GM12878 (cell line): ENCODE measurements at regions of chr18 and their contacts with region 1.

Region 1: DNA sequence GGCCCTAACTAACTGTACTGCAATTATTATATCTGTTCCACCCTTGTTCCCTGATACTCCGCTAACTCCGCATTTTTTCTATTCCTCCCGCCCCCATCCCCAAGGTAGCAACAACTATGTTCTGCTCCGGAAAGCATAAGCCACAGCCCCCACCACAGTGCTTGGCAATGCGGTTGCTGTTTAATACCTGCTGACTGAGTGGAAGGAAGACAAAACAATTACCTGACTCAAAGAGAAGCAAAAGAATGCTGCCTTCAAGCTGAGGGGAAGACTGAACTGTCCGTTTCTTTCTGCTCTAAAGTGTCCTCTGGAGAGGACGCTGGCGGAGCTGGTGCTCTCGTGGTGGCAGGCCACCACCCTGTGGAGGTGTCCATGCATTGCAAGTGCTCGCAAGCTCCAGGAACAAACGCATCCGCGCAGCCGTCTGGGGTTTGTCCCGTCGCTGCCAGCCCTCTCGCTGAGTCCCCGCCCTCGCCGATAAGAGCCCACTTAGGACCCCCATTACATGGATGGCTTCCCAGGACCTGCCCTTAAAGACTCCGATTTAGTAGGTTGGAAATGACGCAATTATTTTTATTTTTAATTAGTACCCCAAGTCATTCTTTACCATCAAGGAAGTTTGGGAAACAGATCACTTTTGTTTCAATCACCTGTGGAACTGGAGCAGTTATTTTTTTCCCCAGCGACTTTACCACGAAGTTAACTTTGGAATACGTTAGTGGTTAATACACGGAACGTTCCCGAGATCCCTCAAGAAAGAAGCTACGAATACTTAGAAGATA is 1.6 kb upstream of the MYL12A start:
- DNase-seq: no peak
- ATAC-seq: peak; percentile 71
- H3K4me3 ChIP-seq: peak overlapping the region; percentile 91
- H3K27ac ChIP-seq: peak overlapping the region; percentile 95
- H3K4me1 ChIP-seq: no peaks in the 10 kb centered on the region
- H3K27me3 ChIP-seq: no peaks in the 10 kb centered on the region
- CTCF ChIP-seq: peak; percentile 98 to 99 (median 98)
- EP300 ChIP-seq: 0 out of 4 replicates have a peak, but pooled peaks of 1 of the 2 experiments have one; percentile 38
- POLR2A ChIP-seq: peak; percentile 60
- RAD21 ChIP-seq: peak; percentile 96

Region 2: GRCh38 chr18:2758309-2758708 is 487.7 kb before region 1 on chr18:
- CTCF ChIA-PET with region 1: no interaction called
- POLR2A ChIA-PET with region 1: no interaction called
- RAD21 ChIA-PET with region 1: no interaction called
- SMC1A ChIA-PET with region 1: no interaction called
- in situ Hi-C with region 1: no loop called
- intact Hi-C with region 1: loop called (anchors 10 kb)
- DNase-seq: no peak
- ATAC-seq: no peak
- H3K4me3 ChIP-seq: no peak overlapping the region
- H3K27ac ChIP-seq: no peak overlapping the region
- H3K4me1 ChIP-seq: no peaks in the 10 kb centered on the region
- H3K27me3 ChIP-seq: no peaks in the 10 kb centered on the region
- CTCF ChIP-seq: no peak
- EP300 ChIP-seq: no peak
- POLR2A ChIP-seq: no peak
- RAD21 ChIP-seq: no peak

Region 3: GRCh38 chr18:2958819-2959298 is 287.2 kb before region 1 on chr18:
- CTCF ChIA-PET with region 1: interaction called, 29 read pairs
- POLR2A ChIA-PET with region 1: interaction called, 5 read pairs
- RAD21 ChIA-PET with region 1: interaction called, 28 read pairs
- SMC1A ChIA-PET with region 1: interaction called, 31 read pairs
- in situ Hi-C with region 1: no loop called
- intact Hi-C with region 1: no loop called
- DNase-seq: no peak
- ATAC-seq: peak; percentile 65
- H3K4me3 ChIP-seq: peak overlapping the region; percentile 20; the same call in 1 of the 2 replicates
- H3K27ac ChIP-seq: peak overlapping the region; percentile 93
- H3K4me1 ChIP-seq: peaks cover 70% of the 10 kb centered on the region
- H3K27me3 ChIP-seq: no peaks in the 10 kb centered on the region
- CTCF ChIP-seq: no peak
- EP300 ChIP-seq: 0 out of 4 replicates have a peak, but pooled peaks have one; percentile 6 to 11
- POLR2A ChIP-seq: no peak
- RAD21 ChIP-seq: no peak

Region 4: GRCh38 chr18:2985628-2986027 is 260.4 kb before region 1 on chr18:
- CTCF ChIA-PET with region 1: interaction called, 98 read pairs
- POLR2A ChIA-PET with region 1: interaction called, 15 read pairs
- RAD21 ChIA-PET with region 1: interaction called, 118 read pairs
- SMC1A ChIA-PET with region 1: interaction called, 58 read pairs
- in situ Hi-C with region 1: no loop called
- intact Hi-C with region 1: loop called (anchors 5 kb)
- DNase-seq: no peak
- ATAC-seq: peak; percentile 67
- H3K4me3 ChIP-seq: no peak overlapping the region
- H3K27ac ChIP-seq: no peak overlapping the region
- H3K4me1 ChIP-seq: peaks cover 21% of the 10 kb centered on the region
- H3K27me3 ChIP-seq: no peaks in the 10 kb centered on the region
- CTCF ChIP-seq: peak; percentile 56 to 71 (median 62)
- EP300 ChIP-seq: no peak
- POLR2A ChIP-seq: no peak
- RAD21 ChIP-seq: peak; percentile 81

Region 5: DNA sequence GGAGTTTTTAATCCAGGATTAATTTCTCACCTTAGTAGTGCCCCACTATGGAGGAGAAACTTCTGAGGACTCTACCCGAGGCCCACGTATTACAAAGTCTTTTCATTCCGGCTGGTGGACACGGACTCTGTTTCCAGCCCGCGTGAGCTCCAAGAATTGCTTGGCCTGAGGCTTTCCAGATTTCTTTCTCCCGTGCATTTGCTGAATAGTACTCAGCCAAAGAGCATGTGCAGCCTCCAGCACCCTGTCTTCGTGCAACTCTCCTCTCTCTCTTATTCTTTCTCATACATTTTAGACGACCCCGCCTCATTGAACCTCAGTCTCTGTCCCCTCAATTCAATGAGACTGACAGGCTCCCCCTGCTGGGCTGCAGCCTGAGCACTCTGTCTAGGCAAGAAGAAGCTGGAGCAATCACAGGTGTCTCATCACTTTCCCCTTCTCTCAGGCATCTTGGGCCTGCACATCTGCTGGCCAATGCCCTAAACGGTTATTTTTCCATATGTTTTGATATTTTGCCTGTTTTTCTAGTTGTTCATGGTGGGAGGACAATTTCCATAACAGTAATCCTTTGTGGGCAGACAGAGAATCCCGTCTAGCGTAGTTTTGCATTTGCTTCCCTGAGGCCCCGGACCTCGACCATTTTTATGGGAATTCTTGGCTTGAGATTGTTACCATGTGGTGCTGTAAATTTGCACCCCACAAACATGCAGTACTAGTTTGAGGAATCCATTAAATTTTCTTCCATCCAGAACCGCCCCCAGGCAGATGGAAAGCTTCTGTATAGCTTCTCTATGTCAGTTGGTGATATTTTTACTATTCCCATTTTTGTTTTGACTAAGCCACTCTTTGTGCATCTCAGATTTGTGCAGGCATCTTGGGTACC is 183.0 kb before region 1 on chr18:
- CTCF ChIA-PET with region 1: interaction called, 29 read pairs
- POLR2A ChIA-PET with region 1: interaction called, 3 read pairs
- RAD21 ChIA-PET with region 1: interaction called, 38 read pairs
- SMC1A ChIA-PET with region 1: interaction called, 39 read pairs
- in situ Hi-C with region 1: no loop called
- intact Hi-C with region 1: loop called (anchors 1 kb)
- DNase-seq: no peak
- ATAC-seq: peak; percentile 79
- H3K4me3 ChIP-seq: no peak overlapping the region
- H3K27ac ChIP-seq: no peak overlapping the region
- H3K4me1 ChIP-seq: peaks cover 32% of the 10 kb centered on the region
- H3K27me3 ChIP-seq: no peaks in the 10 kb centered on the region
- CTCF ChIP-seq: peak; percentile 77 to 87 (median 82)
- EP300 ChIP-seq: no peak
- POLR2A ChIP-seq: no peak
- RAD21 ChIP-seq: peak; percentile 77

Region 6: DNA sequence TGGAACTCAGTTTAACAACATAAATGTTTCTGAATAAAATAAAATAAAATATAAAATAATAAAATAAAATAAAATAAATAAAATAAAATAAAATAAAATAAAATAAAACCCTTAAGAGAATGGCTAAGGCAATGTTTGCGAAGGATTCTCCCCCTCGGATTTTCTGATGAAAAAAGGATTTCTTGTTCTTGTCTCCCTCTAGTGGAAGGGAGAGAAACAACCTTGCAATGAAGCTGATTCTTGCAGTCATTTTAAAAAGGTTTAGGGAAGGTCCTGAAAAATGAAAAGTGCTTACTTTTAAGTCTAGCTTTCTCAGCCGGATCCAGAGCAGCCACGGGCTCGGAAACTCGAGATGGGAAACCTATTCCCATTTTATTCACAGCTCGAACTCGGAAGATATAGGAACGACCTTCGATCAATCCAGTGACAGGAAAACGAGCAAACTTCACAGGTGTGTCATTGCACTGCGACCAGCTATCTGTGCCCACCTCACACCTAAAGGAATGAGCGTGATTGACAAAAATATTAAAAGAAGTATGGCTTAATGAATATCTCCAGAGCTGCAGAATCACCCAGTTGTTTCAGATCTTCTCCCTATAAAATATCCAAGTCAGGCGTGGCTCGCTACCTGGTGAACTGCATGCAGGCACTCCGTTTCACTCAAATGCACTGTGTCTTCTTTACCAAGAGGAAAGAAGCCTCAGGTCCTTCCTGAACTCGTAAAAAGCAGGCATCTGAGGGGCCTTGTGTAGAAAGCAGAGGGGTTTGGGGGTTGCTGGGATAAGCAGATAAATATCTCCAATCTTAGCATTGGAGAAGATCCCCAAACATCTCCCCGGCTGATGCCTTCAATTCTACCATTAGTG is 94.4 kb before region 1 on chr18:
- CTCF ChIA-PET with region 1: interaction called, 62 read pairs
- POLR2A ChIA-PET with region 1: interaction called, 15 read pairs
- RAD21 ChIA-PET with region 1: interaction called, 55 read pairs
- SMC1A ChIA-PET with region 1: interaction called, 48 read pairs
- in situ Hi-C with region 1: no loop called
- intact Hi-C with region 1: loop called (anchors 1 kb)
- DNase-seq: no peak
- ATAC-seq: no peak
- H3K4me3 ChIP-seq: no peak overlapping the region
- H3K27ac ChIP-seq: no peak overlapping the region
- H3K4me1 ChIP-seq: peaks cover 12% of the 10 kb centered on the region
- H3K27me3 ChIP-seq: no peaks in the 10 kb centered on the region
- CTCF ChIP-seq: peak; percentile 56 to 72 (median 69); a peak in 5 of 6 replicates
- EP300 ChIP-seq: no peak
- POLR2A ChIP-seq: no peak
- RAD21 ChIP-seq: peak; percentile 78

Region 7: GRCh38 chr18:3261371-3262246 is 15.6 kb after region 1 on chr18 and contains the start of gene MYL12B:
- CTCF ChIA-PET with region 1: interaction called, 15 read pairs
- POLR2A ChIA-PET with region 1: interaction called, 36 read pairs
- RAD21 ChIA-PET with region 1: interaction called, 37 read pairs
- SMC1A ChIA-PET with region 1: interaction called, 105 read pairs
- in situ Hi-C with region 1: no loop called
- intact Hi-C with region 1: loop called (anchors 1 kb)
- DNase-seq: no peak
- ATAC-seq: peak; percentile 80
- H3K4me3 ChIP-seq: peak within 1 kb of the TSS; percentile 84
- H3K27ac ChIP-seq: peak within 1 kb of the TSS; percentile 91
- H3K4me1 ChIP-seq: peaks cover 14% of the 10 kb centered on the region
- H3K27me3 ChIP-seq: no peaks in the 10 kb centered on the region
- CTCF ChIP-seq: no peak
- EP300 ChIP-seq: no peak
- POLR2A ChIP-seq: peak; percentile 95
- RAD21 ChIP-seq: no peak
- polyA plus RNA-seq, gene MYL12B: 662 to 739 TPM

Region 8: DNA sequence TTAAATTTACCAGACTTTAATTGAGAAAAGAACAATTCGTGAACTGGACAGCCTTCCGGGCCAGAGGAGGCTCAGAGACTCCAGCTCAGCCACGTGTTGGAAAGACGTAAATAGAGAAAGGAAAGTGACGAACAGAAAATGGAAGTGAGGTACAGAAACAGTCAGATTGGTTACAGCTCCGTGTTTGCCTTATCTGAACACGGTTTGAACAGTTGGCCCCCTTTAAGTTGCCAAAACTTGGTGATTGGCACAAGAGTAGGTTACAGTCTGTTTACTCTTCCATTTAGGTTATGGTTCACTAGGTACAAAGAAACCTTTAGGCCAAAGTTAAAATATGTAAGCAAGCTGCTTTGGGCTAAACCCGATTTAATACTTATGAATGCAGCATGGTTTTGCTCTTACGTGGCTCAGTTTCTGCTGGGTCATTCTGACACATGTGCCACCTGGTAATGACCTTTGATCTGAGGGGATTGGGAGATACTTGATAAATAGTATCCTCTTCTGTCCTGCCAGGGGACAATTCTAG is 138.7 kb after region 1 on chr18:
- CTCF ChIA-PET with region 1: no interaction called
- POLR2A ChIA-PET with region 1: no interaction called
- RAD21 ChIA-PET with region 1: no interaction called
- SMC1A ChIA-PET with region 1: no interaction called
- in situ Hi-C with region 1: no loop called
- intact Hi-C with region 1: no loop called
- DNase-seq: peak; percentile 21
- ATAC-seq: peak; percentile 93
- H3K4me3 ChIP-seq: no peak overlapping the region
- H3K27ac ChIP-seq: peak overlapping the region; percentile 56
- H3K4me1 ChIP-seq: peaks cover 15% of the 10 kb centered on the region
- H3K27me3 ChIP-seq: peaks cover 0 to 2% of the 10 kb centered on the region in 2 experiments; a peak in 1 of 4 replicates
- CTCF ChIP-seq: no peak
- EP300 ChIP-seq: no peak
- POLR2A ChIP-seq: no peak
- RAD21 ChIP-seq: no peak